ENCODE measurements at regions of chr9 and their contacts with region 1.

Region 1: DNA sequence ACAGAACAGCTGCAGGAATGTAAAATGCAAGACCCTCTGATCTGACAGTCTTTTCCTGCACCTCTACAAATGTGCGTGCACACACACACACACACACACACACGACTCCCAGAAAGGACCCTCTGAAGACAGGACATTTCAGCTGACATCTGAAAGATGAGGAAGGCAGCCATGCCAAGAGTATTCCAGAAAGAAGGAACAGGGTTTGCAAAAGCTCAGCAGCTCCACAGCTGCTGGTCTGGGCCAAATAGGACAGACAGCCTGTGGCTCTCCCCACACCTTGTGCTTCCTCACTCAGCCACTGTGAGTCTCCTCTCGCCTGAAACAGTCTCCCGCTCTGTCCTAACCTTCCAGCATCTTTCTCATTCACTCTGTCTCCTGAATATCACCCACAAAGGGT is 189.0 kb downstream of the PALM2AKAP2 start:
- DNase-seq: peak; percentile 54
- ATAC-seq: peak; percentile 79
- H3K4me3 ChIP-seq: no peak overlapping the region
- H3K27ac ChIP-seq: no peak overlapping the region; the same call in 1 of the 2 replicates
- H3K4me1 ChIP-seq: peaks cover 23% of the 10 kb centered on the region
- H3K27me3 ChIP-seq: no peaks in the 10 kb centered on the region
- CTCF ChIP-seq: peak; percentile 34; the same call in 1 of the 2 replicates
- POLR2A ChIP-seq: no peak
- RAD21 ChIP-seq: peak; percentile 45

Region 2: DNA sequence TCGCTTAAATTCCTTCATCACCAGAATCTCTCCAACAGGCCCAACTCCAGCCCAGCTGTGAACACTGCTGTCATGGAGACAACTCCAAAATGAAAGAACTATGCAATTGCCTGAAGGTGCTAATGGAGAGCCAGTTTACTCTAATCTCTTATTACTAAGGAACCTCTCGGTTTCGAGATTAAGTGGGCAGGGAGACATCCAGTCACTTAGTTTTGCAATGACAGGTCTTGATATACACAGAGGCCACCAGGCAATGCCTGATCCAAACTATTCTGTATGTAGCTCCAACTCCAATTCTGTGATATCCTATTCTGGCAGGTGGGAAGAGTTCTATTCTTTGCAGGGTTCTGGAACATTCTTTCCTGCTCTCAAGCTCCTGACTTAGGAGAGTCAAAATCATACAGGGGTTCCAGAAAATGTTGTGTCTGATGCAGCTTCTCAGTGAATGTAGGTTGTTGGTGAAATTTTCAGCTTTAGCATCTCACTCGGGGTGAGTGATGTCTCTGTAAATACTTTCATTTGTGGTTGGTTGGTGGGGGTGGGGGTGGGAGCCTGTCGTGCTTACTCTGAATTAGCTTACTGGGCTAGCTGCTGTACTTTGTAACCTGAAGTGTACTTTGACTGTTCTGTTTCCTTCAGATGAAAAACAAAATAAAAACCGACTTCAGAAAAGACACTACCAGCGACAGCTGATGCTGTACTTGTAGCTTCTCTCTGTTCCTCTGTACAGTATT is 18.1 kb before region 1 on chr9:
- CTCF ChIA-PET with region 1: interaction called, 11 read pairs
- POLR2A ChIA-PET with region 1: no interaction called
- dilution Hi-C with region 1: no loop called
- in situ Hi-C with region 1: no loop called
- intact Hi-C with region 1: no loop called
- DNase-seq: no peak
- ATAC-seq: no peak
- H3K4me3 ChIP-seq: no peak overlapping the region
- H3K27ac ChIP-seq: no peak overlapping the region
- H3K4me1 ChIP-seq: no peaks in the 10 kb centered on the region
- H3K27me3 ChIP-seq: no peaks in the 10 kb centered on the region
- CTCF ChIP-seq: no peak
- POLR2A ChIP-seq: no peak
- RAD21 ChIP-seq: no peak

Measured in IMR-90 (cell line).